ENCODE measurements at regions of chr13 and their contacts with region 1.

Region 1: GRCh38 chr13:30091691-30092090 is 215.7 kb downstream of the KATNAL1 start:
- DNase-seq: no peak
- H3K4me3 ChIP-seq: no peak overlapping the region
- H3K27ac ChIP-seq: no peak overlapping the region
- H3K4me1 ChIP-seq: no peaks in the 10 kb centered on the region
- H3K27me3 ChIP-seq: no peaks in the 10 kb centered on the region
- CTCF ChIP-seq: no peak
- POLR2A ChIP-seq: no peak

Region 2: GRCh38 chr13:29948244-29948643 is 143.4 kb before region 1 on chr13:
- intact Hi-C with region 1: loop called (anchors 10 kb)
- DNase-seq: no peak
- H3K4me3 ChIP-seq: no peak overlapping the region
- H3K27ac ChIP-seq: no peak overlapping the region
- H3K4me1 ChIP-seq: no peaks in the 10 kb centered on the region
- H3K27me3 ChIP-seq: no peaks in the 10 kb centered on the region
- CTCF ChIP-seq: no peak
- POLR2A ChIP-seq: no peak